Activated B cell treated with CpG ODN at 0.5 μM for 24 hours (primary cell): ENCODE measurements at regions of chr3 and their contacts with region 1.

Region 1: GRCh38 chr3:270688-271087 is 74.1 kb downstream of the CHL1 start:
- DNase-seq: no peak
- ATAC-seq: peak; percentile 55
- H3K4me3 Mint-ChIP-seq: peak overlapping the region; percentile 39
- H3K27ac Mint-ChIP-seq: peak overlapping the region; percentile 43
- H3K4me1 Mint-ChIP-seq: peaks cover 65% of the 10 kb centered on the region
- H3K27me3 Mint-ChIP-seq: no peaks in the 10 kb centered on the region
- CTCF ChIP-seq: no peak

Region 2: GRCh38 chr3:229183-229661 is 41.5 kb before region 1 on chr3:
- CTCF ChIA-PET with region 1: no interaction called
- POLR2A ChIA-PET with region 1: interaction called, 3 read pairs
- intact Hi-C with region 1: loop called (anchors 5 kb)
- DNase-seq: no peak
- ATAC-seq: no peak
- H3K4me3 Mint-ChIP-seq: no peak overlapping the region
- H3K27ac Mint-ChIP-seq: no peak overlapping the region
- H3K4me1 Mint-ChIP-seq: no peaks in the 10 kb centered on the region
- H3K27me3 Mint-ChIP-seq: no peaks in the 10 kb centered on the region
- CTCF ChIP-seq: no peak